GM13977 (cell line): ENCODE measurements at regions of chr13 and their contacts with region 1.

Region 1: DNA sequence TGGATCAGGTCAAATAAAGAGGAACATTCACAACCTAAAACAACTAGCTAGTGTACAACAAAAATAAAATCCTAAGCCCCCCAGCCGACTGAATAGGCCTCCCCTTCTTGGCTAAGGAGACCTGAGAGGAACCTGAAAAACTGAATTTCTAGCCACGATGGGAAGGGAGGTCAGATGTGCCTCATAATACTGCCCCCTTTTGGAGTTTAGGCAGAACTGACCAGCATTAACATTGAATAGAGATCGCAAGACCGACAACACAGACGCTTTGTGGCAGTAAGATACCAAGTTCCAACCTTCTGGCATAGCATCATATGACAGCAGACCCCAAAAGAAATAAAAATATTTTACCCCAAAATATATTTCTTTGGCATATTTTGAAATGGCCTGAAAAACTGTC is 15.9 kb downstream of the CBY2 start:
- DNase-seq: peak; percentile 71
- CTCF ChIP-seq: peak; percentile 79

Region 2: DNA sequence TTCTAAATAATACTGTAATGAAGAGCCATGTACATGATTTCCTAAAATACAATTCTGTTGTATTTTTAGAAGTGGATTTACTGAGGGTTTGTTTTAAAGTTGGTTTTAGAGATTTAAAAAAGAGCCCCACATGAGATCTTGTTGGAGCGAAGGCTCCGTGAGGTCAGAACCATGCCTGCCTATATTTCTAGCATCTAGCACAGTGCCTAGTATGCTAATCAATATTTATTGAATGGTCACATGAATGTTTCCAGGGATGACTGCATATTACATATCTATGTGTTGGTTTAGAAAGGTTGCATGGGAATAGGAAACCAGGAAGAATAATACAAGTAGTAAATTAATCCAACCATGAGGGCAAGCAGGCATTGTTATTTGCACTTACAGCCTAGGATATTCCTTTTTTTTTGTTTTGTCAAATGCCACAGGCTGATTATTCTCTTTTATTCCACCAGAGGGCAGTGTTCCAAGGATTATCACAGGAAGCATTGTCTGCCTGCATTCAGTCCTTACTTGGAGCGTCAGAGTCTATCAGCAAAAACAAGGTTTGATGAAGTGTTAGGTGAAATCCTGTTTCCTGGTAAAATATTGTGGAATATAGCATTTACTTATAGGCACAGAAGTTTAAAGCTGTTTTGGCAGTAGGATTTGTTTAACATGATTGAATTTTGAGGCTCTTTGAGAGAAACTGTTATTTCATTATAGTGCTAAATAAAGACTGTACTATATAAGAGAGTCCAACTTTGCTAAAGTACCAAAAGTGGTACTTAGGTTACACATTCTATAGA is 206.6 kb before region 1 on chr13:
- in situ Hi-C with region 1: loop called (anchors 25 kb)
- DNase-seq: peak; percentile 65
- CTCF ChIP-seq: peak; percentile 68

Region 3: DNA sequence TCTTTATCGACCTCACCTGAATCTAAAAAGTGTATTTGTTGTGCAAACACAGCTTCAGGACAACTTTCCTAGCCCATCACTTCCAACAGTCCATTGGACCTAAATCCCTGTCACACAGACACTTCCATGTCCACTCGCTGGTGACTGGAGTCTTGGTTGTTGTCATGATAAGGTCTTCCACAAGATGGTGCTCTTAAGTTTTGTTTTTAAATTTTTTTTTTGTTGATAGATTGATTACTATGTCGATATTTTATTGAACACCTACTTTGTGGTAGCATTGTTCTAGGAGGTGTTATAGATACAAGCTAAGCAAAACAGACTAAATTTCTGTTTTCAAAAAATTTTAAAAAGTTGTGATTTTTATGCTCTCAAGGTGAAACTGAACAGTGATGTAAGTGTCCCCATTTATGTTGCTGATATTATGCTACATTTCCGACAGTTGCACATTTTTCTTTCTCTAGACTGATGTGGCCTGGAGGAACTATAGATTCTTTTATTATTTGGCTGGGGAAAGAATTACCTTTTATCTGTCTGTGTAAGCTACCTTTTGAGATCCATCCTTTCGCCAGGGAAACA is 94.5 kb before region 1 on chr13:
- in situ Hi-C with region 1: loop called (anchors 5 kb)
- DNase-seq: peak; percentile 45
- CTCF ChIP-seq: peak; percentile 60